ENCODE measurements at regions of chr11 and their contacts with region 1.

Region 1: DNA sequence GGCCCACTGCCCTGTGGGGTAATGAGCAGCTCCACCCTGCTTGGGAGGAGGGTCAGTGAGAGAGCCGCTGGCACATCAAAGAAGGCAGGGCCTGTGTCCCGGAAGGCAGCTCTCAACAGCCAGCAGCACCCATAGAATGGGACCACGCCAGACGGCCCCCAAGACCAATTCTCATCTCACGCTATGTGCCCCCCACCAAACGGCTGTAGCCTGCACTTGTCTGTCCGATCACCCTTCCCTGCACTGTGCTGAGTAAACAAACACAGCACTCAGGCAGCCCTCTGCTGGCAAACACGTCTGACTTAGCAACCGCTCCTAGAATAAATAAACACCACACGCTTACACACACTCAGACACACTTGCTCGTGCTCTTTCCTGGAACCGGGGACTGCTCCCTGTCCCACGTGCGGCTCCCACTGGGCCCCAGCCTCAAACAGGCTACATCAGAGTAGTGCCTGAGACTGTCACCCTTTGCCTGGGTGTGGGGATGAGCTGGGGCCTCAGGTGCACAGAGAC is 53.2 kb upstream of the CDON start:
- DNase-seq: peak; percentile 93
- ATAC-seq: peak; percentile 91
- H3K4me3 ChIP-seq: peak overlapping the region; percentile 22 to 73 (median 38); a peak in 5 of 6 replicates
- H3K27ac ChIP-seq: peak overlapping the region; percentile 65
- H3K4me1 ChIP-seq: peaks cover 64% of the 10 kb centered on the region
- H3K27me3 ChIP-seq: peaks cover 5 to 9% of the 10 kb centered on the region in 2 experiments; a peak in 2 of 5 replicates
- CTCF ChIP-seq: peak; percentile 77
- EP300 ChIP-seq: peak; percentile 70 to 77; a peak in 3 of 4 replicates
- POLR2A ChIP-seq: peak; percentile 31 to 37; a peak in 2 of 4 replicates
- RAD21 ChIP-seq: peak; percentile 65

Region 2: GRCh38 chr11:126062679-126063506 is 53.0 kb before region 1 on chr11 and contains the start of gene CDON:
- CTCF ChIA-PET with region 1: no interaction called
- POLR2A ChIA-PET with region 1: interaction called, 13 read pairs
- in situ Hi-C with region 1: no loop called
- intact Hi-C with region 1: loop called (anchors 2 kb)
- DNase-seq: peak; percentile 86
- ATAC-seq: peak; percentile 91
- H3K4me3 ChIP-seq: peak within 1 kb of the TSS; percentile 75 to 86 (median 80)
- H3K27ac ChIP-seq: peak within 1 kb of the TSS; percentile 100
- H3K4me1 ChIP-seq: peaks cover 53% of the 10 kb centered on the region
- H3K27me3 ChIP-seq: no peaks in the 10 kb centered on the region
- CTCF ChIP-seq: peak; percentile 60
- EP300 ChIP-seq: peak in 1 of 2 experiments; percentile 4; a peak in 1 of 4 replicates
- POLR2A ChIP-seq: peak in 1 of 2 experiments; percentile 71; a peak in 2 of 4 replicates
- RAD21 ChIP-seq: peak; percentile 74
- total RNA-seq, gene CDON: 8.4 and 12.8 TPM in 2 replicates

Region 3: GRCh38 chr11:126102436-126102981 is 13.4 kb before region 1 on chr11:
- CTCF ChIA-PET with region 1: no interaction called
- POLR2A ChIA-PET with region 1: interaction called, 26 read pairs
- in situ Hi-C with region 1: no loop called
- intact Hi-C with region 1: no loop called
- DNase-seq: peak; percentile 25
- ATAC-seq: peak; percentile 60
- H3K4me3 ChIP-seq: no peak overlapping the region; a peak in 1 of 6 replicates
- H3K27ac ChIP-seq: no peak overlapping the region
- H3K4me1 ChIP-seq: peaks cover 89% of the 10 kb centered on the region
- H3K27me3 ChIP-seq: peaks cover 3 to 13% of the 10 kb centered on the region in 2 experiments; a peak in 2 of 5 replicates
- CTCF ChIP-seq: no peak
- EP300 ChIP-seq: no peak
- POLR2A ChIP-seq: no peak
- RAD21 ChIP-seq: no peak

Region 4: DNA sequence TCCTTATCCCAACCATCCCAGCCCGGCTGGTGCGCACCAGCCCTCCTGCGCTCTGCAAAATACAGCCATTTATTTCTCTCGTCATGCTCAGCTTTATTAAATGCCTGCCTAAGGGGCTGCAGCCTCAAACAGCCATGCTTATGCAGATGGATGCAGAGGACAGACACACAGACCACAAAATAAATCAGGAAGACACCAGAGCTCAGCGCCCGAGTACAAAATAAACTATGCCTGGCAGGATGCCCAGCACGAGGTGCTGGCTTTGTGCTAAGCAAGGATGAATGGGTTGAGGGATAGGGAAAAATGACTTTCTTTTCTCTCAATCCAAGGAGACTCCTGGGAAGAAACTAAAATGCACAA is 25.0 kb after region 1 on chr11:
- CTCF ChIA-PET with region 1: no interaction called
- POLR2A ChIA-PET with region 1: interaction called, 40 read pairs
- in situ Hi-C with region 1: no loop called
- intact Hi-C with region 1: loop called (anchors 1 kb)
- DNase-seq: no peak
- ATAC-seq: no peak
- H3K4me3 ChIP-seq: no peak overlapping the region
- H3K27ac ChIP-seq: no peak overlapping the region
- H3K4me1 ChIP-seq: peaks cover 62% of the 10 kb centered on the region
- H3K27me3 ChIP-seq: peaks cover 0 to 7% of the 10 kb centered on the region in 2 experiments; a peak in 1 of 5 replicates
- CTCF ChIP-seq: no peak
- EP300 ChIP-seq: no peak
- POLR2A ChIP-seq: no peak
- RAD21 ChIP-seq: no peak

Region 5: GRCh38 chr11:126163074-126163700 is 47.3 kb after region 1 on chr11:
- CTCF ChIA-PET with region 1: no interaction called
- POLR2A ChIA-PET with region 1: interaction called, 10 read pairs
- in situ Hi-C with region 1: no loop called
- intact Hi-C with region 1: no loop called
- DNase-seq: peak; percentile 68
- ATAC-seq: peak; percentile 46
- H3K4me3 ChIP-seq: peak overlapping the region in 2 of 3 experiments; percentile 39 to 48; a peak in 4 of 6 replicates
- H3K27ac ChIP-seq: peak overlapping the region; percentile 58
- H3K4me1 ChIP-seq: peaks cover 95% of the 10 kb centered on the region
- H3K27me3 ChIP-seq: peaks cover 0 to 1% of the 10 kb centered on the region in 2 experiments; a peak in 1 of 5 replicates
- CTCF ChIP-seq: no peak
- EP300 ChIP-seq: peak in 1 of 2 experiments; percentile 76; a peak in 2 of 4 replicates
- POLR2A ChIP-seq: no peak
- RAD21 ChIP-seq: no peak

Region 6: DNA sequence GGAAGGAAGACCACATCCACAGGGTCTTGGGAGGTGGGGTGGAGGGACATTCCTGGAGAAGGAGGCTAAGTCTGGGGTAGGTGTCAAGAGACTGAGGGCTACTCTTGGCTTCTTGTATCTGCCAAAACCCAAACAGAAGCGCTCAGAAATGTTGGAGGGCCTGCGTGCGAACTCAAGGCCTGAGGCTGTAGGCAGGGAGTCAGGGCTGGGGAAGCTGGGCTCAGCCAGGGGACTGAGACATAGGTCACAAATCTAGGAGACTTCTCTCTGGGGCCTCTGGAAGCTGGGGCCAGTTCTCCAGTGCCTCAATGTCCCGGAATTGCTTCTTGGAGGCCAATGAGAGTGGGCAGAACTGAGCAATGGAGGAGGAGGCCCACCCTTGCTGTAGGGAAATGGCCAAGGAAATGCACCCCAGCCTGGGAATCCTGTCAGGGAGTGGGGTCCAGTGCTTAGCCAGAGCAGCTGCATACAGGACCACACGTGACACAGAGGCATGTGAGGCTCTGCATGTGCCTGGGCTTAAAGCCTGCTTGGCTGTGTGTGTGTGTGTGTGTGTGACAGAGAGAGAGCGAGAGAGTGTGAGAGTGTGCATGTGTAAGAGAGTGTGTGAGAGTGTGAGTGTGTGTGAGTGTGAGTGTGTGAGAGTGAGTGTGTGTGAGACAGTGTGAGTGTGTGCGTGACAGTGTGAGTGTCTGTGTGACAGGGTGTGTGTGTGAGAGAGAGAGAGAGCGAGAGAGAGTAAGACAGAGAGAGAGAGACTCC is 380.9 kb after region 1 on chr11:
- CTCF ChIA-PET with region 1: no interaction called
- POLR2A ChIA-PET with region 1: no interaction called
- in situ Hi-C with region 1: no loop called
- intact Hi-C with region 1: no loop called
- DNase-seq: no peak
- ATAC-seq: no peak
- H3K4me3 ChIP-seq: no peak overlapping the region
- H3K27ac ChIP-seq: no peak overlapping the region
- H3K4me1 ChIP-seq: no peaks in the 10 kb centered on the region
- H3K27me3 ChIP-seq: peaks cover 4 to 53% of the 10 kb centered on the region in 2 experiments
- CTCF ChIP-seq: no peak
- EP300 ChIP-seq: no peak
- POLR2A ChIP-seq: no peak
- RAD21 ChIP-seq: no peak